ENCODE measurements at regions of chr1 and their contacts with region 1.

Region 1: GRCh38 chr1:27102707-27103491 is 52.0 kb downstream of the SLC9A1 start:
- ATAC-seq: peak; percentile 3 to 61 (median 32)
- H3K4me3 ChIP-seq: no peak overlapping the region
- H3K27ac ChIP-seq: no peak overlapping the region
- H3K4me1 ChIP-seq: peaks cover 27 to 30% of the 10 kb centered on the region in 2 donors

Region 2: DNA sequence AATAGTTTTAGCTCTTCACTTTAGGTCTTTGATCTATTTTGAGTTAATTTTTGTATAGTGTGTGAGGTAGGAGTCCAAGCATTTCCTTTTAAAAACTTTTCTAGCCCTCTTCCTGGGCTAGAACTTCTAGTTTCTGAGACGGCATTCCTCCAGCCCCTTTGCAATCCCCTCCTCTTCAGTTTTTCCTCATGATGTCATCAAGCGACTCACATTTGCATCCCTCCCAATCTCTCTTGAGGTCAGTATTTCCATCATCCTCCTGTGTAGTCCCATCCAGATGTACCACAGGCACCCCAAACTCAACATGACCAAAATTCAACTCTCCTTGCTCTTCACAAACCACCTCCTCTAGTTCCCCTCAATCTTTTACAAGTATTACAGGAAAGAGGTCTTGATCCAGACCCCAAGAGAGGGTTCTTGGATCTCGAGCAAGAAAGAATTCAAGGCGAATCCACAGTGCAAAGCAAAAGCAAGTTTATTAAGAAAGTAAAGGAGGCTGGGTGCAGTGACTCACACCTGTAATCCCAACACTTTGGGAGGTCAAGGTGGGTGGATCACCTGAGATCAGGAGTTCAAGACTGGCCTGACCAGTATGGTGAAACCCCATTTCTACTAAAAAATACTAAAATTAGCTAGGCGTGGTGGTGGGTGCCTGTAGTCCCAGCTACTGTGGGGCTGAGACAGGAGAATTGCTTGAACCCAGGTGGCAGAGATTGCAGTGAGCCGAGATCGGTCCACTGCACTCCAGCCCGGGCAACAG is 619.8 kb before region 1 on chr1:
- in situ Hi-C with region 1: no loop called
- ATAC-seq: no peak
- H3K4me3 ChIP-seq: no peak overlapping the region
- H3K27ac ChIP-seq: no peak overlapping the region
- H3K4me1 ChIP-seq: peaks cover 6 to 9% of the 10 kb centered on the region in 2 donors

Region 3: GRCh38 chr1:26500488-26501175 is 602.3 kb before region 1 on chr1:
- in situ Hi-C with region 1: no loop called
- ATAC-seq: peak; percentile 75 to 87 (median 83)
- H3K4me3 ChIP-seq: peak overlapping the region; percentile 45 to 68 (median 59)
- H3K27ac ChIP-seq: peak overlapping the region; percentile 54 to 70
- H3K4me1 ChIP-seq: peaks cover 0 to 2% of the 10 kb centered on the region in 2 donors

Region 4: GRCh38 chr1:27275696-27276095 is 172.8 kb after region 1 on chr1:
- in situ Hi-C with region 1: loop called in 7 of 9 experiments (anchors 10 to 25 kb)
- ATAC-seq: no peak
- H3K4me3 ChIP-seq: no peak overlapping the region
- H3K27ac ChIP-seq: no peak overlapping the region
- H3K4me1 ChIP-seq: no peaks in the 10 kb centered on the region

Measured in motor neuron (in vitro differentiated cells).